Activated CD4-positive, alpha-beta T cell treated with anti-CD3 and anti-CD28 coated beads, Interleukin-2, amount 10 ng/mL, durations not matched to agents 7 days and 5 days (primary cell): ENCODE measurements at regions of chr6 and their contacts with region 1.

Region 1: DNA sequence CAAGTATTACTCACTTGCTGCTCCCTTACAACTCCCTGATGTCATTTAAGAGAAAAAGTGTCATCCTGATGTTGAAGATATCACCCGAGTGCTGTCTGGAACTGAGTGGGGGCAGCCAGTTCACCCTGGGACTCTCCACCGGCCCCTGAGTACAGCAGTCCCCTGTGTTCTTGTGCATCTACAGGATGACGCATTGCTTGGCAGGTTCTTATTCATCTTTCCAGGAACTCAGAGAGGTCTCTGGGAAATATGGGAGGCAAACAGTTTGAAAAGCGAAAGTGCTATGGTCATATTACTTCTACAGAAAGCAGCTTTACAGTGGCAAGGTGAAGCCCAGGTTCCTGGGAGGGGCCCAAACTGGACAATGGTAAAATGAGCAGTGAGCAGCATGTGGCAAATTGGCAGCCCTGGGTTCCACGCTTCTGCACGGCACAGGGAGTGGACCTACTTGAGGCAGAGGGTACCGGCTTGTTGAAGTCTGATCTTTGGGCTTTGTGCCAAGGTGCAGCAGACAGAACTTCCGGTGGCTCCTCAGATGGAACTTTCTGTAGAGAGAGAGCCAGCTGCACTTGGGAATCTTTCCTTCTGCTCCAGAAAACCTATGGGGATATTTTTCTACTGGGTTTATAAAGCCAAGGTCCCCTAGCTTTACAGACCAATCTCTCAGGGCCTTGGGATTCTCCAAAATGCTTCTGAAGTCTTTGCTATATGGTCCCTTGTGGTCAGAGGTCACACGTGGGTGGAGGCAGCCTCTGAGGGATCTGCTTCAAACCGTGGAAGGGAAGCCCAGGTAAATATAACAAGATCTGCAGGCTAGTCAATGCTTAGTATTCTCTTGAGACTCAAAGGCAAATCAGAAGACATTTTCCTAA is 128.3 kb downstream of the MAP3K7 start:
- DNase-seq: peak; percentile 67
- H3K4me3 Mint-ChIP-seq: peak overlapping the region; percentile 71
- H3K27ac Mint-ChIP-seq: peak overlapping the region; percentile 95
- H3K4me1 Mint-ChIP-seq: peaks cover 75% of the 10 kb centered on the region
- H3K27me3 Mint-ChIP-seq: no peaks in the 10 kb centered on the region

Region 2: DNA sequence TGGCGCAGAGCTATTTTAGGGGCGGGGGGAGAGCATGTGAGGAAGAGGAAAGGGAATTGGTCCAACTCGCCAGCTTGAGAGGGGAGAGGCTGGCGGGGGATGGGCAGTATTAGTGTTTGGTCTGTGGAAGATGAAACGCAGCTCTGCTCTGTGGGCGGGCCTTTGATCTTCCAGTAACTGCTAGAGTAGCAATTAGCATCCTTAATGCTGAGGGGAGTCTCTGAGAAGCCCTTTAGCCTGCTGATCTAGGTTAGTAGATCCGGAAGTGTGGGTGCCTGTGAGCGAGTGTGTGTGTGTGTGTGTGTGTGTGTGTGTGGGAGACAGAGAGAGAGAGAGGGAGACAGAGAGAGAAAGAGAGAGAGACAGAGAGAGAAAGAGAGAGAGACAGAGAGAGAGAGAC is 44.7 kb before region 1 on chr6:
- CTCF ChIA-PET with region 1: interaction called, 19 read pairs
- POLR2A ChIA-PET with region 1: interaction called, 3 read pairs
- DNase-seq: peak; percentile 79
- H3K4me3 Mint-ChIP-seq: peak overlapping the region; percentile 65
- H3K27ac Mint-ChIP-seq: peak overlapping the region; percentile 92
- H3K4me1 Mint-ChIP-seq: peaks cover 70% of the 10 kb centered on the region
- H3K27me3 Mint-ChIP-seq: peaks cover 2% of the 10 kb centered on the region

Region 3: DNA sequence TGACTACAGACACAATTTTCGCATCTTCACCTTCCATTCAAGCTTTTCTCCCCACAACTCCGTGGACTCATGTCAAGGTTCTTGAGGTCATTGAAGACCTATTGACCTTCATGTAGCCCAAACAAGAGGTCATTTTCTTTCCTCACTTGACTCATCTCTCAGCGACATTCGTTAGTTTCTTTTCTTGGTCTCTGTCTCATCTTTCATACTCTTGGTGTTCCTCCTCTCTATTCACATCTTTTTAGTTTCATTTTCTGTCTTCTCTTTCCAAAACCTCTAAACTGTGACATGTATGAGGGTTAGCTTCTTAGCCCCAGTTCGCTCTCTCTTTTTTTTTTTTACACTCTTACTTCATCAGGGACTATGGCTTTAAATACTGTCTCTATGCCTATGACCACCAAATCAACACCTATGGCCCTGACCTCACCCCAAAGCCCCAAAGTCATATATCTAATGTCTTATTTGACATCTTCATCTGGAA is 33.4 kb before region 1 on chr6:
- CTCF ChIA-PET with region 1: interaction called, 24 read pairs
- POLR2A ChIA-PET with region 1: interaction called, 3 read pairs
- DNase-seq: no peak
- H3K4me3 Mint-ChIP-seq: peak overlapping the region; percentile 65
- H3K27ac Mint-ChIP-seq: peak overlapping the region; percentile 97
- H3K4me1 Mint-ChIP-seq: peaks cover 24% of the 10 kb centered on the region
- H3K27me3 Mint-ChIP-seq: no peaks in the 10 kb centered on the region

Region 4: DNA sequence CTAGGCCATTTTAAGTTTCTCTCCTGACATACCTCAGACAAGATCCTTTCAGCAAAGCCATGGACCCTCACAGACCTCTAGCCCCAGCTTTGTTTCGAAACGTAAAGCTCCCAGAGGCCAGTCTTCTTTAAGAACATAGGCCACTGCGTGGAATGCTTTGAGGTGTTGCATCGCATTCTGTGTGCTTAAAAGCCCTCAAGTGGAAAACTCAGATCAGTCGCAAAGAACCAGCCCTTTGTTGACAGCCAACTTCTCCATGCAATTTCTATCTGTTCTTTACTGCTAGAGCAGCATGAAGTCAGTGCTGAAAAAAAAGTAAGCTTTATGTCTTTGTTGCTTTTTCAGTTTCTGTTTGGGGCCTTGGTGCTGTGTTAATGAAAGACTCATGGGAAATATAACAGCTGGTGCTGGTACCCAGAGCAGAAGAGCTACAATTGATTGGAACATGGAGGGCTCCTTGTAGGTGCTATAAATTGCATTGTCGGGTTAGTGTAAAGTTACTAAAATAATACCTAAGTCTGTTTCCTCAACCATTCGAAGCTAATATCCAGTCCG is 14.4 kb before region 1 on chr6:
- CTCF ChIA-PET with region 1: interaction called, 27 read pairs
- POLR2A ChIA-PET with region 1: no interaction called
- DNase-seq: no peak
- H3K4me3 Mint-ChIP-seq: no peak overlapping the region
- H3K27ac Mint-ChIP-seq: peak overlapping the region; percentile 39
- H3K4me1 Mint-ChIP-seq: peaks cover 27% of the 10 kb centered on the region
- H3K27me3 Mint-ChIP-seq: no peaks in the 10 kb centered on the region

Region 5: DNA sequence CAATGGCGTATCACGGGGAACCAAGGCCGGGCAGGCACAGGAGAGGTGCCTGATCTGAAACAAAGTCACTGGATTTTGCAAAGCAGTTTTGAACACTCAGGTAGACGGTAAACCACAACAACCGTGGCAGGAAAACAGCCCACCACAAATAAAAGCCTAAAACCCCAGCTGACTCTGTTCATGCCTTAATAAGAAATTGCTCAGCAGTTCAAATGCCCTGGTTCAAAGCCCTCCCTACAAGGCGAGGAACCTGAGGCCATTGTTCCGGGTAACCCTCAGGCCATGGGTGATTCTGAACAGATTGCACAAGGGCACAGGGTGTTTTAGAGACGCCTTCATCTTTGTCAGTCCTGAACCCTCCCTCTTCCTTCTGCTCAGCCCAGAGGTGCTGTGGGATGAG is 14.2 kb after region 1 on chr6:
- CTCF ChIA-PET with region 1: interaction called, 72 read pairs
- POLR2A ChIA-PET with region 1: no interaction called
- DNase-seq: peak; percentile 74
- H3K4me3 Mint-ChIP-seq: peak overlapping the region; percentile 54
- H3K27ac Mint-ChIP-seq: peak overlapping the region; percentile 94
- H3K4me1 Mint-ChIP-seq: peaks cover 98% of the 10 kb centered on the region
- H3K27me3 Mint-ChIP-seq: peaks cover 3% of the 10 kb centered on the region

Region 6: GRCh38 chr6:90478789-90479602 is 20.4 kb after region 1 on chr6:
- CTCF ChIA-PET with region 1: interaction called, 72 read pairs
- POLR2A ChIA-PET with region 1: no interaction called
- DNase-seq: peak; percentile 87
- H3K4me3 Mint-ChIP-seq: no peak overlapping the region
- H3K27ac Mint-ChIP-seq: peak overlapping the region; percentile 1
- H3K4me1 Mint-ChIP-seq: peaks cover 58% of the 10 kb centered on the region
- H3K27me3 Mint-ChIP-seq: no peaks in the 10 kb centered on the region